ENCODE measurements at regions of chr6 and their contacts with region 1.

Region 1: DNA sequence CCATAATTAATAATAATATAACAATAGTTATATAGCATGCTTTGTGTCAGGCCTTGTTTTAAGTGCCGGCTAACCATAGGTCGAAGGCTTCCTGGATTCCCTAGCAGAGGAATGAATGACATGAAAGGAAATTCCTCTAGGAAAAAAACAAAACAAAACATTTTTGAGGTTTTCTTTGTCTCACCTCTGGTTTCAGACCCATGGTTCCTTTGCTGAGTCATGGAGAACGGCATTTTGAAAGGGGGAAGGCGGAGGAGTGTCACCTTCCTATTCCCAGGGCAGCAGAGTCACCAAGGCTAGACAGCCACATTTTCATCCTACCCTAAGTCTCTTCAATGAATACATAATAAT is 25.3 kb upstream of the CCND3 start:
- DNase-seq: peak; percentile 77
- H3K4me3 ChIP-seq: no peak overlapping the region
- H3K27ac ChIP-seq: peak overlapping the region; percentile 66
- H3K4me1 ChIP-seq: peaks cover 29% of the 10 kb centered on the region
- H3K27me3 ChIP-seq: no peaks in the 10 kb centered on the region
- CTCF ChIP-seq: no peak

Region 2: DNA sequence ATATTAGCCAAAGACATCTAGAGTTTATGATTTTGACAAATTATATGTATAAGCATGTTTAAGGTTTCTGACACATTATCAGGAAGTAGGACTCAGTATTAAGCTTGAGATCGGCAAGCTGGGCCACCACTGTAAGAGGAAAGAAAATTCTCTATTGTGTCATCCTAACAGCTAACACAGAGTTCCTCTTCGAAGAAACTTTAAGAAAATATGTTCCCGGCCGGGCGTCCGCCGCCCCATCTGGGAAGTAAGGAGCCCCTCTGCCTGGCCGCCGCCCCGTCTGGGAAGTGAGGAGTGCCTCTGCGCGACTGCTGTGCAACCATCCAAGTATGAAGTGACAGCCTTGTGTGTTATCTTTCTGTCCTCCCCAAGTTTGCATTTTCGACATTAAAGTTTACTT is 94.8 kb before region 1 on chr6:
- CTCF ChIA-PET with region 1: no interaction called
- dilution Hi-C with region 1: loop called (anchors 5 kb)
- in situ Hi-C with region 1: no loop called
- intact Hi-C with region 1: no loop called
- DNase-seq: no peak
- H3K4me3 ChIP-seq: no peak overlapping the region
- H3K27ac ChIP-seq: no peak overlapping the region
- H3K4me1 ChIP-seq: no peaks in the 10 kb centered on the region
- H3K27me3 ChIP-seq: no peaks in the 10 kb centered on the region
- CTCF ChIP-seq: no peak

Region 3: DNA sequence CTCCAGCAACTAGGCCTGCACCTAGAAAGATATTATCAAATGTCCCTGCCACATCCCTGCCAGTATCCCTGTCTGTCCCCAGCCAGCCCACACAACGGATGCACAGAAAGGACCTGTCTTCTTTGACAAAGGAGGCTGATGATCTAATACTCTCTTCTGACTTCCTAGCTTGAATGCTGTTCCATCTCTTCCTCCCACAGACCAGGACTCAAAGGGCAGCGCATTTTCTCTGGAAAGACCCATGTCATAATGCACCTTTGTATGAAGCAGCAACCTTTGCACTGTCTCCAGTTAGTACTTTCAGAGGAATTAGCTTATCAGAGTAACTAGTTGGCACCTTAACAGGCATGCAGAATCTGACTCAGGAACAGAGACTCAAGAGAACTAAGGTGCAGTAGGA is 30.1 kb after region 1 on chr6:
- CTCF ChIA-PET with region 1: no interaction called
- dilution Hi-C with region 1: loop called (anchors 5 kb)
- in situ Hi-C with region 1: no loop called
- intact Hi-C with region 1: no loop called
- DNase-seq: no peak
- H3K4me3 ChIP-seq: no peak overlapping the region
- H3K27ac ChIP-seq: no peak overlapping the region
- H3K4me1 ChIP-seq: no peaks in the 10 kb centered on the region
- H3K27me3 ChIP-seq: no peaks in the 10 kb centered on the region
- CTCF ChIP-seq: no peak

Region 4: GRCh38 chr6:42038811-42039408 is 72.0 kb after region 1 on chr6:
- CTCF ChIA-PET with region 1: no interaction called
- dilution Hi-C with region 1: loop called (anchors 5 kb)
- in situ Hi-C with region 1: no loop called
- intact Hi-C with region 1: no loop called
- DNase-seq: no peak
- H3K4me3 ChIP-seq: no peak overlapping the region
- H3K27ac ChIP-seq: no peak overlapping the region
- H3K4me1 ChIP-seq: peaks cover 3% of the 10 kb centered on the region
- H3K27me3 ChIP-seq: no peaks in the 10 kb centered on the region
- CTCF ChIP-seq: no peak

Measured in mammary epithelial cell (primary cell).